ENCODE measurements at regions of chr9 and their contacts with region 1.

Region 1: DNA sequence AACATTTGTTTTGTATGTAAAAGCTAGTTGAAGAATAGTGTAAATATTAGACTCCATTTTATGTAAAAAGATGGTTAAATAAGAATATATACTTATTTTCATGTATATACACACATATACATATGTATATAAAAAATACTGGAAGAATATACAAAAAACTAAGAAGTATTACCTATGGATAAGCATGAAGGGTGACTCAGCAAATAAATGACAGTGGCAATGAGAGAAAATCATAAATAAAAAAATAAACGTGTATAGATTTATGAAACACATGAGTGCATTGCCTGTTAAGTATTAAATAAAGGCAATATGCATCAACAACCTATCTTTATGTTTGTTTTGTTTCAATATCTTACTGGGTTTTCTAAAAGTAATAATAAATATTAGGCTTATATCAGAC is 435.3 kb downstream of the CYLC2 start:
- DNase-seq: no peak
- H3K4me3 ChIP-seq: no peak overlapping the region
- CTCF ChIP-seq: no peak
- POLR2A ChIP-seq: no peak

Region 2: DNA sequence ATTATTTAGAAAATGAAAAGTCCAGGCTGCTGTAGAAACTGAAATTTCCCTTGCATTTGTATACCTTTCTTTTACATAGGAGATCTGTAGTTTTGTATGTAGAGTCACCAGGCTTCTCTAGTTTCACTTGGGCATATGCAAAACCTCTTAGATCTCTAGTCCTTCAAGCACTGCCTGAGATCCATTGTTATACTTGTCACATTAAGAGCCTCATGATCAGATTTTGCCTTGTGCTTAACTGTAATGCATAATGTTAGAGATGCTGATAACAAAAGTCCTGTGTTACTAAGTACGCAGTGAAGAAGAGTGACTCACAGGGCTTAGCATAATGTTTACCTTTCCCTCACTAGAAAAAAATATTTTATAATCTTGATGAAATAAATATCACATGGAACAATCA is 185.1 kb before region 1 on chr9:
- intact Hi-C with region 1: no loop called
- DNase-seq: no peak
- H3K4me3 ChIP-seq: no peak overlapping the region
- CTCF ChIP-seq: no peak
- POLR2A ChIP-seq: no peak

Region 3: DNA sequence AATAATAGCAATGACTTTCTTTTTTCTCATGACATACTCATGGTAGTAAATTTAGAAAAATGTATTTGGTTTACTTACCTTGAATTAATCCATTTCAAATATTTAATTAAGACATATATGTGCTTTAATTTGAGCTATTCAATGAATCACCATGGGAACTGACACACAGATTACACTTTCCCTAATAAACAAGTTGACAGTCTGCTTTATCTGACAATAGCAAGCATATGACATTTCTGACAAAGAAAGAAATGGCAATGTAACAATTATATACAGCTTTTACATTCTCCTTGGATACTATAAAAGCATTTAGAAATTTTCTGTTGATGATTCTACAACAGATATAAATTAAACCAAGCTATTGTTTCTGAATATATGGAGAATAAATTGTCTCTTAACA is 52.8 kb before region 1 on chr9:
- intact Hi-C with region 1: no loop called
- DNase-seq: no peak
- H3K4me3 ChIP-seq: no peak overlapping the region
- CTCF ChIP-seq: no peak
- POLR2A ChIP-seq: no peak

Region 4: GRCh38 chr9:104725014-104725413 is 1294.5 kb after region 1 on chr9:
- intact Hi-C with region 1: loop called (anchors 10 kb)
- DNase-seq: no peak
- H3K4me3 ChIP-seq: no peak overlapping the region
- CTCF ChIP-seq: no peak
- POLR2A ChIP-seq: no peak

Measured in lower leg skin (tissue), 4 donors.